Activated CD4-positive, alpha-beta T cell treated with anti-CD3 and anti-CD28 coated beads for 36 hours (primary cell): ENCODE measurements at regions of chr7 and their contacts with region 1.

Region 1: DNA sequence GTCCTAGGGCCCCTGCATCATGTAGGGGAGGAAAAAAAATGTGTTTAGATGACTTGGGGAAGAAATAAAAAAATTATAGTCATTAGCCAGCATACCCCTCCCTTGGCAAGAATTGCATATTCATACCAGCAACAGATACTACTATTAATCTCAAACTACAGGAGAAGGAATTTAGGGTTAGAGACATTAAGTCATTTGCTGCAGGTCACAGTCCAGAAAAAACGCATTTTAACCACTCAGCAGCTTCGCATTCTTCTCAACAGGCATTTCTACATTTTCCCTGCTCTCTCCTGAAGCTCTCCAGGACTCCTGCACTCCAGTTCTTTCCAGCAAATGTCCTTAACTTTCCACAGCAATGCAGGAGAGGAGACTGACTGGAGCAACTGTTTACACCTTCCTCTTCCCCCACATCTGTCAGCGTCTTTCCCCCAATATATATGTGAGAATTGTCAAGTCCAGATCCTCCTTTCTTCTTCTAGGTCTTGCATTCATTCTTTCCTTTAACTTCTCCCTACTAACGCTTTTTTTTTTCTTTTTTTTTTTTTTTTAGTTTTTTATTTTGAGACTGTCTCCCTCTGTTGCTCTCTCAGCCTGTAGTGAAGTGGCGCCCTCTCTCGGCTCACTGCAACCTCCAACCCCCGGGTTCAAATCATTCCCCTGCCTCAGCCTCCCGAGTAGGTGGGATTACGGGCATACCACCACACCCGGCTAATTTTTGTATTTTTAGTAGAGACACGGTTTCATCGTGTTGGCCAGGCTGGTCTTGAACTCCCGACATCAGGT is 35.6 kb downstream of the PRPS1L1 start:
- DNase-seq: peak; percentile 68
- ATAC-seq: no peak
- H3K4me3 Mint-ChIP-seq: no peak overlapping the region
- H3K27ac Mint-ChIP-seq: no peak overlapping the region
- H3K4me1 Mint-ChIP-seq: peaks cover 4% of the 10 kb centered on the region
- H3K27me3 Mint-ChIP-seq: peaks cover 9% of the 10 kb centered on the region

Region 2: GRCh38 chr7:17680943-17681351 is 311.1 kb before region 1 on chr7:
- CTCF ChIA-PET with region 1: interaction called, 3 read pairs
- POLR2A ChIA-PET with region 1: no interaction called
- intact Hi-C with region 1: loop called in 1 of 2 experiments (anchors 2 kb)
- DNase-seq: no peak
- ATAC-seq: no peak
- H3K4me3 Mint-ChIP-seq: no peak overlapping the region
- H3K27ac Mint-ChIP-seq: no peak overlapping the region
- H3K4me1 Mint-ChIP-seq: no peaks in the 10 kb centered on the region
- H3K27me3 Mint-ChIP-seq: no peaks in the 10 kb centered on the region

Region 3: DNA sequence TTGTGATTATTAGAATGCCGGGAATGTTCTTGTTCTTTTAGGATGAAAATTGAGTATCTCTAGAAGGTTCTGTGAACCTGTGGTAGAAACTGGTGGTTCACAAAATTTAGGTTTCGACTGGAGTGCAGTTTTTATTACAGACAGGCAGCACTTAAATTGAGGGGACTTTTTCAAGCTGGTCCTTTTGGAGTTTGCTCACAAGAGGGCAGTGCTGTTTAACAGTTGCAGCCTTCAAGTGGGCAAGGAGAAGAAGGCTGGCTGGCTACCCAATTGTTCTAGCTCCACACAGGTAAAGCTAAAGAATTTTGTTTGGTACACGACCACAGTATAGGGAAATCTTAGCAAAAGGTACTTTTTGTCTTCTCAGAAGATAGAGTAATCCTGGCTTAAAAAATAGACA is 285.3 kb before region 1 on chr7:
- CTCF ChIA-PET with region 1: no interaction called
- POLR2A ChIA-PET with region 1: no interaction called
- intact Hi-C with region 1: loop called (anchors 2 to 10 kb)
- DNase-seq: peak; percentile 55
- ATAC-seq: peak; percentile 71
- H3K4me3 Mint-ChIP-seq: no peak overlapping the region
- H3K27ac Mint-ChIP-seq: no peak overlapping the region
- H3K4me1 Mint-ChIP-seq: no peaks in the 10 kb centered on the region
- H3K27me3 Mint-ChIP-seq: peaks cover under 1% of the 10 kb centered on the region

Region 4: DNA sequence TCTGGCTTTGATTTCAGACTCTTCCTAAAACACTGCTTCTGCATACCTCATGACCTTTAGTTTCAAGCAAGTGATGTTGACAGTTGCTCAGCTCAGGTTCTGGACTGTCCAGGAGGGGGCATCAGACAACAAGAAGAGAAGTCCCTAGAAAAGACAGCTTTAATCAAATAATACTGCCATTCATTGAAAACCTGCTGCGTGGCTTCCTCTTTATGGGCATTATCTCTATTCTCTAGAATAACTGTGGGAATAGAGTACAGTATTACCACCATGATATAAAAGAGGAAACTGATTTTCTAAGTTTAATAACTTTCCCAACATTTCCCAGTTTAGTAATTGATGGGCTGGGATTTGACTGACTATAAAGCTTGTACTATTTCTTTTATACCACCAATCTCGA is 222.1 kb before region 1 on chr7:
- CTCF ChIA-PET with region 1: interaction called, 5 read pairs
- POLR2A ChIA-PET with region 1: no interaction called
- intact Hi-C with region 1: loop called (anchors 1 kb)
- DNase-seq: peak; percentile 75
- ATAC-seq: peak; percentile 64
- H3K4me3 Mint-ChIP-seq: no peak overlapping the region
- H3K27ac Mint-ChIP-seq: no peak overlapping the region
- H3K4me1 Mint-ChIP-seq: peaks cover 3% of the 10 kb centered on the region
- H3K27me3 Mint-ChIP-seq: no peaks in the 10 kb centered on the region